ENCODE measurements at regions of chr18 and their contacts with region 1.

Region 1: GRCh38 chr18:26176134-26176533 is 42.5 kb downstream of the PSMA8 start:
- DNase-seq: no peak
- ATAC-seq: peak; percentile 63
- H3K4me3 ChIP-seq: no peak overlapping the region
- H3K27ac ChIP-seq: no peak overlapping the region
- H3K4me1 ChIP-seq: no peaks in the 10 kb centered on the region
- H3K27me3 ChIP-seq: no peaks in the 10 kb centered on the region
- CTCF ChIP-seq: no peak
- EP300 ChIP-seq: no peak
- POLR2A ChIP-seq: no peak
- RAD21 ChIP-seq: no peak

Region 2: GRCh38 chr18:26215247-26215970 is 39.3 kb after region 1 on chr18:
- CTCF ChIA-PET with region 1: no interaction called
- POLR2A ChIA-PET with region 1: interaction called, 3 read pairs
- RAD21 ChIA-PET with region 1: no interaction called
- SMC1A ChIA-PET with region 1: interaction called, 12 read pairs
- in situ Hi-C with region 1: no loop called
- intact Hi-C with region 1: no loop called
- DNase-seq: peak; percentile 71
- ATAC-seq: peak; percentile 99
- H3K4me3 ChIP-seq: peak overlapping the region; percentile 41; the same call in 1 of the 2 replicates
- H3K27ac ChIP-seq: peak overlapping the region; percentile 62
- H3K4me1 ChIP-seq: peaks cover 10% of the 10 kb centered on the region
- H3K27me3 ChIP-seq: no peaks in the 10 kb centered on the region
- CTCF ChIP-seq: no peak
- EP300 ChIP-seq: no peak
- POLR2A ChIP-seq: no peak; the same call in 1 of the 2 replicates
- RAD21 ChIP-seq: no peak

Measured in GM12878 (cell line).